ENCODE measurements at regions of chr15 and their contacts with region 1.

Region 1: DNA sequence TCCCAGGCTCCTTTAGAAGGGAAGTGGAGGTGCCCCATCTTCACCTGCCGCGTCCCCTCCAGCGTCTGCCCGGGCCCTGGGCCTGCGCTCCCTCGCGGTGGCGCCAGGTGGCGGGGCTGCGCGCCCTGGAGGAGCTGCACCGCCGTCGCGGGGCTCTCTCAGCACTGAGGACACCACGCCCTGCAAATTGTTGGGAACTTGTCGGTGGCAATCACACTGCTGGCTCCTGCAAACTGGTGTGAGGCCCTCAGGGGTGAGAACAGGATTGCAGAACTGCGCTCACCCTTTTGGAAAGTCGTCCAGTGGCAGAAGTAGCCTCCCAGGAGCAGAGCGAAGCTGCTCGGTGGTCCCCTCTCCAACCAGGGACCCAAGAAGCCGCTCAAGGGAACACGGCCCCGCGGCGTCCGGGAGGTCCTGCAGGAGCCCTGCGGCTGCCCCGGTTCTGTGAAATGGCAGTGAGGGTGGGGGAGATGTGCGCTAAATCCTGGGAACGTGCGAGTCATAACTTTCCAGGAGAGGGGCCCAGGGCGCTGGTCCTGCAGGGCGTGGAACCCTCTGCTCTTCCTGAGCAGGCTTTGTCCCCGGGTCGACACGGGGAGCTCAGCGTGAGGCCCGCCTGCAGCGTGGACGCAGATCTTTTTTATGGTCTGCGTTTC is 995 bp upstream of the LRRK1 start:
- DNase-seq: no peak
- ATAC-seq: peak; percentile 83
- H3K4me3 ChIP-seq: peak overlapping the region; percentile 89
- H3K27ac ChIP-seq: peak overlapping the region; percentile 83
- H3K4me1 ChIP-seq: peaks cover 21% of the 10 kb centered on the region
- H3K27me3 ChIP-seq: no peaks in the 10 kb centered on the region
- CTCF ChIP-seq: peak; percentile 93 to 98 (median 96)
- EP300 ChIP-seq: no peak
- POLR2A ChIP-seq: peak; percentile 46; the same call in 1 of the 2 replicates
- RAD21 ChIP-seq: peak; percentile 87

Region 2: DNA sequence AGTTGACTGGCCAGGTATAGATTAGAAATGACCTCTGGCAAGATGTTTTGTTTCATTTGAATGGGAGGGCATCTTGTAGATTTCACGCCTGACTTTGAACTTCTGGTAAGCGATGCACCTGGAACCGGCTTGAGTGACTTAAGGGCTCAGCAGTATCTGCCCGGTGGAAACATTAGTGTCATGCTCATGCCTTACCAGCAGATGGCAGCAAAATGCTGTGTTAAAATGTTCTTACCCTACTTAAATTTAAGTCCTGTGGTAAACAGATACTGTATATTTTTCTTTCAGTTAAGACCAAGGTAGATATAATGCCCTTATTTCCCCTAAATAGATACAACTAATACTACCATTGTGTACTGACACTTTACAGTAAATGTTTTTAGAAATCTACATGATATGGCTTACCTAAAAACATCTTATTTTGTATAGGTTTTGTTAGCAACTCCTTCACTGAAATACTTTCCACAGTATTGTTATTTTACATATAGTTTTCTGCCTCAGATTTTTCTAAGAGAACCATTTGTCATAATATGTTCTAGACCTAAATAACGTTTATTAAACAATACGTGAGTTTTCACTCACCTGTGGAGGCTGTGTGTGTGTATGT is 290.3 kb before region 1 on chr15:
- CTCF ChIA-PET with region 1: interaction called, 15 read pairs
- POLR2A ChIA-PET with region 1: no interaction called
- RAD21 ChIA-PET with region 1: interaction called, 4 read pairs
- SMC1A ChIA-PET with region 1: interaction called, 6 read pairs
- in situ Hi-C with region 1: no loop called
- intact Hi-C with region 1: loop called (anchors 5 kb)
- DNase-seq: peak; percentile 43
- ATAC-seq: peak; percentile 92
- H3K4me3 ChIP-seq: no peak overlapping the region
- H3K27ac ChIP-seq: no peak overlapping the region
- H3K4me1 ChIP-seq: no peaks in the 10 kb centered on the region
- H3K27me3 ChIP-seq: no peaks in the 10 kb centered on the region
- CTCF ChIP-seq: peak; percentile 73 to 86 (median 80); a peak in 5 of 6 replicates
- EP300 ChIP-seq: no peak
- POLR2A ChIP-seq: no peak
- RAD21 ChIP-seq: peak; percentile 73

Region 3: DNA sequence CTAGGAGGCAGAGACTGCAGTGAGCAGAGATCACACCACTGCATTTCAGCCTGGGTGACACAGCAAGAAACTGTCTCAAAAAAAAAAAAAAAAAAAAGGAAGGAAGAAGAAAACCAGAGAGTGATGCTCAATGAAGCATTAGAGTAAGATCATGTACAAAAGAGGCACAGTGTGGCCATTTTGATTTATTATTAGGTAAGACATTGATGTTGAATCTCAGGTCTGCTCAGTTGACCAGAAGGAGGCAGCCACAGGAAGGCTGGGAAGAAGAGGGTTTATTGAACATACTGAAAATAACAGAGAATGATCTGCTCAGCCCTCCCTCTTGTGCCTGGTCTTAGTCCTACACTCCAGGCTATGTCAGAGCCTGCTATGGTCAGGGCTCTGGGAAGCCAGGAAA is 16.6 kb after region 1 on chr15:
- CTCF ChIA-PET with region 1: interaction called, 59 read pairs
- POLR2A ChIA-PET with region 1: interaction called, 97 read pairs
- RAD21 ChIA-PET with region 1: interaction called, 48 read pairs
- SMC1A ChIA-PET with region 1: interaction called, 45 read pairs
- in situ Hi-C with region 1: no loop called
- intact Hi-C with region 1: no loop called
- DNase-seq: no peak
- ATAC-seq: peak; percentile 75
- H3K4me3 ChIP-seq: no peak overlapping the region
- H3K27ac ChIP-seq: peak overlapping the region; percentile 54
- H3K4me1 ChIP-seq: peaks cover 57% of the 10 kb centered on the region
- H3K27me3 ChIP-seq: no peaks in the 10 kb centered on the region
- CTCF ChIP-seq: peak in 2 of 3 experiments; percentile 28 to 36; a peak in 4 of 6 replicates
- EP300 ChIP-seq: no peak
- POLR2A ChIP-seq: no peak
- RAD21 ChIP-seq: peak; percentile 41; the same call in 1 of the 2 replicates

Region 4: DNA sequence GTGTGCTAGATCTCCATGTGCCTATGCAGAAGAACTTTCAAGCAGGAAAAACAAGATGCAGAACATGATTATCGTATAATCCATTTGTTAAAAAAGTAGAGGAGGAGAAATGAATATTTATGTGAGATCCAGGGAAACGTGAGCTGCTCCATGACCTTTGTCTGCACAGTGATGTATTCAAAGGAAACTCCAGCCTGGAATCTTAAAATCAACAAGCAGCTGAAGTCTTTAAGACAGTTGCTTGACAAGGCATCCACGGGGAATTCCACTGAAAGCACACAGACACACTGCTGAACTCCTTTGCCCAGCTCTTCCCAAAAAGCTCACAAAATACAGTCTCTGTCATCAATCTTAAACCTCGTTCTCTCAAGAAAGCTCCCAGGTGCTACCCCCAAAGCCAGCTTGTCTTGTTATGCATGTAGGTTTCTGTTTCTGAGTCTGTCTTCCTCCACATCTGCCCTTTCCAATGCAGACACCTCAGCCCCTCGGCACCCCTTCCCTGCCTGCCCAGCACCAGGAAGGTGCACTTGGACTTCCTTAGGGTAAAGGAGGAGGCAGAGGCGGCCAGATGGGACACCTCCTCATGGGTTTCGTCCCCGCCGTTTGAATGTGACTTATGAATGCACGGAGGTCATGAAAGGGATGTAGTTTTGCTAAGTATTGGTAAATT is 29.7 kb after region 1 on chr15:
- CTCF ChIA-PET with region 1: interaction called, 129 read pairs
- POLR2A ChIA-PET with region 1: interaction called, 97 read pairs
- RAD21 ChIA-PET with region 1: interaction called, 152 read pairs
- SMC1A ChIA-PET with region 1: interaction called, 122 read pairs
- in situ Hi-C with region 1: no loop called
- intact Hi-C with region 1: no loop called
- DNase-seq: no peak
- ATAC-seq: peak; percentile 79
- H3K4me3 ChIP-seq: peak overlapping the region; percentile 42
- H3K27ac ChIP-seq: peak overlapping the region; percentile 60
- H3K4me1 ChIP-seq: peaks cover 11% of the 10 kb centered on the region
- H3K27me3 ChIP-seq: no peaks in the 10 kb centered on the region
- CTCF ChIP-seq: no peak
- EP300 ChIP-seq: no peak
- POLR2A ChIP-seq: no peak; the same call in 1 of the 2 replicates
- RAD21 ChIP-seq: no peak

Region 5: GRCh38 chr15:100968050-100968966 is 50.1 kb after region 1 on chr15:
- CTCF ChIA-PET with region 1: interaction called, 11 read pairs
- POLR2A ChIA-PET with region 1: interaction called, 5 read pairs
- RAD21 ChIA-PET with region 1: interaction called, 11 read pairs
- SMC1A ChIA-PET with region 1: interaction called, 13 read pairs
- in situ Hi-C with region 1: no loop called
- intact Hi-C with region 1: loop called (anchors 2 kb)
- DNase-seq: peak; percentile 30
- ATAC-seq: peak; percentile 88
- H3K4me3 ChIP-seq: no peak overlapping the region
- H3K27ac ChIP-seq: no peak overlapping the region
- H3K4me1 ChIP-seq: peaks cover 7% of the 10 kb centered on the region
- H3K27me3 ChIP-seq: no peaks in the 10 kb centered on the region
- CTCF ChIP-seq: no peak
- EP300 ChIP-seq: no peak
- POLR2A ChIP-seq: no peak
- RAD21 ChIP-seq: no peak

Region 6: GRCh38 chr15:101000271-101000681 is 82.1 kb after region 1 on chr15:
- CTCF ChIA-PET with region 1: interaction called, 567 read pairs
- POLR2A ChIA-PET with region 1: interaction called, 3 read pairs
- RAD21 ChIA-PET with region 1: interaction called, 287 read pairs
- SMC1A ChIA-PET with region 1: interaction called, 316 read pairs
- in situ Hi-C with region 1: loop called (anchors 5 kb)
- intact Hi-C with region 1: no loop called
- DNase-seq: no peak
- ATAC-seq: no peak
- H3K4me3 ChIP-seq: no peak overlapping the region
- H3K27ac ChIP-seq: no peak overlapping the region
- H3K4me1 ChIP-seq: no peaks in the 10 kb centered on the region
- H3K27me3 ChIP-seq: no peaks in the 10 kb centered on the region
- CTCF ChIP-seq: no peak
- EP300 ChIP-seq: no peak
- POLR2A ChIP-seq: no peak
- RAD21 ChIP-seq: no peak

Region 7: GRCh38 chr15:101269479-101270223 is 351.5 kb after region 1 on chr15:
- CTCF ChIA-PET with region 1: no interaction called
- POLR2A ChIA-PET with region 1: no interaction called
- RAD21 ChIA-PET with region 1: no interaction called
- SMC1A ChIA-PET with region 1: interaction called, 4 read pairs
- in situ Hi-C with region 1: loop called (anchors 5 kb)
- intact Hi-C with region 1: no loop called
- DNase-seq: no peak
- ATAC-seq: no peak
- H3K4me3 ChIP-seq: no peak overlapping the region
- H3K27ac ChIP-seq: no peak overlapping the region
- H3K4me1 ChIP-seq: peaks cover 15% of the 10 kb centered on the region
- H3K27me3 ChIP-seq: no peaks in the 10 kb centered on the region
- CTCF ChIP-seq: peak; percentile 30 to 60 (median 40); a peak in 5 of 6 replicates
- EP300 ChIP-seq: no peak
- POLR2A ChIP-seq: no peak; the same call in 1 of the 2 replicates
- RAD21 ChIP-seq: peak; percentile 16; the same call in 1 of the 2 replicates